ENCODE measurements at regions of chr6 and their contacts with region 1.

Region 1: GRCh38 chr6:142845624-142846458 is 99.1 kb downstream of the HIVEP2 start:
- DNase-seq: no peak
- ATAC-seq: peak; percentile 23
- H3K4me3 ChIP-seq: peak overlapping the region; percentile 48; the same call in 1 of the 2 replicates
- H3K27ac ChIP-seq: peak overlapping the region; percentile 98
- H3K4me1 ChIP-seq: peaks cover 81% of the 10 kb centered on the region
- H3K27me3 ChIP-seq: no peaks in the 10 kb centered on the region
- CTCF ChIP-seq: no peak
- EP300 ChIP-seq: no peak
- POLR2A ChIP-seq: peak; percentile 67
- RAD21 ChIP-seq: no peak

Region 2: DNA sequence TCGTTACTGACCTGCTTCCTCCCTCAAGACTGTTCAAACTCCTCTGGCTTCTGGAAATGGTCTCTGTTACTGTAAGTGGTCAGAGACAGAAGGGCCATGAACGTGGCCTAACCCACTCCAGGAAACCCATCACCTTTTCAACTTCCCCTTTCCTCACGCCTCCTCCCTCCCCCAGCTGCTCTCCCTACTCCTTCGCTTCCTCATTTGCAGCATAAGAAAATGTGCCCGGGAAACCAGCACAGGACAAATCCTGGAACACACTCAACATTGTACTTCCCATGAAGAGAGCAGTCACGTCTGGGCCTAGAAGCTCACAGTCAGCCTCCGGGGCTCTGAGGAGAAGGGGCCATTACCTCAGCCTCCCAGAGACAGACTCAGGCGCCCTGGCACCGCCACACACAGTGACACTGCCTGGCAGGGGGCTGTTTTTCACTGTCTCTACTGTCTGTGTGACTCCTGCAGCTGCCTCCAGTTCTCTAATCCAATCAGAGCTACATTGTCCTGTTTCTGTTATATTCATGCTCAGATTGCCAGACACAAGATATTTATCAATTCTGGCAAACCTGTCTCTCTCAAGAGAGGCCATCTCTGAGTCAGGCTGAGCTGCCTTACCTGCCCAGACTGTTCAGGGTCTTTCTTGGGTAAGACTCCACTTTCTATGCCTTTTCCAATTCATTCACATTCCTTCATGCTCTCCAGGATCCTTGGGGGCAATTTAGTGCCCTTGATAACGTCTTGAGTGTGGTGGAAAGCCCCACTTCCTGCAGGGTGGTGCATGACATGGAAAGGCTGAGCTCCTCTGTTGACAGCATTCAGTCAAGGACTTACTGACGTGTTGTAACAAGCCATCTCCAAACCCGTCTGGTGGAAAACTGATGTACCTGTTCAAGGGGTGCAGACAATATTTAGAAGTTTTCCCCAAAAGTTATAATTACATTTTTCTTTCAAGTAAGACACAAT is 143.1 kb before region 1 on chr6:
- CTCF ChIA-PET with region 1: no interaction called
- POLR2A ChIA-PET with region 1: no interaction called
- RAD21 ChIA-PET with region 1: interaction called, 4 read pairs
- SMC1A ChIA-PET with region 1: interaction called, 11 read pairs
- in situ Hi-C with region 1: no loop called
- intact Hi-C with region 1: no loop called
- DNase-seq: no peak
- ATAC-seq: peak; percentile 53
- H3K4me3 ChIP-seq: no peak overlapping the region
- H3K27ac ChIP-seq: no peak overlapping the region; the same call in 1 of the 2 replicates
- H3K4me1 ChIP-seq: peaks cover 14% of the 10 kb centered on the region
- H3K27me3 ChIP-seq: no peaks in the 10 kb centered on the region
- CTCF ChIP-seq: no peak
- EP300 ChIP-seq: no peak
- POLR2A ChIP-seq: no peak
- RAD21 ChIP-seq: no peak

Region 3: GRCh38 chr6:142802124-142802523 is 43.7 kb before region 1 on chr6:
- CTCF ChIA-PET with region 1: interaction called, 5 read pairs
- POLR2A ChIA-PET with region 1: interaction called, 6 read pairs
- RAD21 ChIA-PET with region 1: interaction called, 22 read pairs
- SMC1A ChIA-PET with region 1: interaction called, 12 read pairs
- in situ Hi-C with region 1: no loop called
- intact Hi-C with region 1: no loop called
- DNase-seq: no peak
- ATAC-seq: peak; percentile 44
- H3K4me3 ChIP-seq: no peak overlapping the region
- H3K27ac ChIP-seq: no peak overlapping the region
- H3K4me1 ChIP-seq: peaks cover 27% of the 10 kb centered on the region
- H3K27me3 ChIP-seq: no peaks in the 10 kb centered on the region
- CTCF ChIP-seq: no peak
- EP300 ChIP-seq: no peak
- POLR2A ChIP-seq: no peak
- RAD21 ChIP-seq: no peak

Region 4: GRCh38 chr6:142827369-142827768 is 18.5 kb before region 1 on chr6:
- CTCF ChIA-PET with region 1: interaction called, 20 read pairs
- POLR2A ChIA-PET with region 1: interaction called, 67 read pairs
- RAD21 ChIA-PET with region 1: interaction called, 374 read pairs
- SMC1A ChIA-PET with region 1: interaction called, 449 read pairs
- in situ Hi-C with region 1: no loop called
- intact Hi-C with region 1: no loop called
- DNase-seq: no peak
- ATAC-seq: no peak
- H3K4me3 ChIP-seq: no peak overlapping the region
- H3K27ac ChIP-seq: no peak overlapping the region
- H3K4me1 ChIP-seq: peaks cover 10% of the 10 kb centered on the region
- H3K27me3 ChIP-seq: no peaks in the 10 kb centered on the region
- CTCF ChIP-seq: no peak
- EP300 ChIP-seq: no peak
- POLR2A ChIP-seq: no peak
- RAD21 ChIP-seq: no peak

Region 5: DNA sequence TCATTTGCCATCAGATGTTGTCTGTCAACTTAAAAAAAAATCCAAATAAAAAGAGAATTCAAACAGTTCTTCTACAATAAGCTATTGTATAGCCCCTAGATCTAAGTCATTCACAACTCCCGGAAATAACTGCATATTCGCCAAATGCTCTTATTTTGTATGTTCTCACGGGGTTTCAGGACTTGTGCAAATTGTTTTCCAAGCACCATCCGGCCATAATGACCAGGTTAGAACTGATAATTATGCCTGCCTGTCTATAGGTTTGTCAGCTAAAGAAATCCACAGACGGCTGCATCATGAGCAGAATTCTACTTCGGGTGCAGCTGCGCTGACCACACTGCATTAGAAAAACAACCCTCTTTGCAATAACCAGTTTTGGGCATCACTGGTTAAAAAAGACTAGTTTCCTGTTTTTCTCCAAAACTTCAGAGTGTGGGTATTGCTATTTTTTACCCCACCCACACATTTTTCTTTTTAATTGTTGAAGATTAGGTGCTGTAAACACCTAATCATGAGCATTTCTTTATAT is 11.5 kb after region 1 on chr6:
- CTCF ChIA-PET with region 1: interaction called, 5 read pairs
- POLR2A ChIA-PET with region 1: interaction called, 19 read pairs
- RAD21 ChIA-PET with region 1: interaction called, 128 read pairs
- SMC1A ChIA-PET with region 1: interaction called, 94 read pairs
- in situ Hi-C with region 1: no loop called
- intact Hi-C with region 1: loop called (anchors 1 kb)
- DNase-seq: no peak
- ATAC-seq: peak; percentile 58
- H3K4me3 ChIP-seq: peak overlapping the region; percentile 59; the same call in 1 of the 2 replicates
- H3K27ac ChIP-seq: peak overlapping the region; percentile 98
- H3K4me1 ChIP-seq: peaks cover 54% of the 10 kb centered on the region
- H3K27me3 ChIP-seq: no peaks in the 10 kb centered on the region
- CTCF ChIP-seq: no peak
- EP300 ChIP-seq: peak in 1 of 2 experiments; percentile 57; a peak in 1 of 4 replicates
- POLR2A ChIP-seq: 0 out of 2 replicates have a peak, but pooled peaks have one; percentile 3
- RAD21 ChIP-seq: no peak

Region 6: DNA sequence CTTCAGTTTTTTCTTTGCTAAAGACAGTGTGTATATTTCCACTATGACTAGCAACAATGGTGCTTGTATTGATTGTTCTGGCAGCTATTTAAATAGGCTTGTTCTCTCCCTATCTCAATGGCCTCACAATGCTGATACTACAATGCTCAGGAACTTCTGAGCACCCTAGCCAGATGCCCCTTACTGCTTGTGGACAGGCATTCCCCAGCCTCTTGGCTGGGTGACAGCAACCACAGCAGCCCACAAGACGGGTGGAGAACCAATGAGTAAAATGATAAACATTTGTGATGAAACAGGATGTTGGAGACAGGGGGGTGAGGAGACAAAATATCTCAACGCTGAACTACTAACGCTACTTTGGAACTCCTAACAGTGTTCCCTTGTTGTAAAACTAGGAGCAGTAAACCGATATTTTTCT is 56.8 kb after region 1 on chr6:
- CTCF ChIA-PET with region 1: interaction called, 3 read pairs
- POLR2A ChIA-PET with region 1: interaction called, 4 read pairs
- RAD21 ChIA-PET with region 1: interaction called, 8 read pairs
- SMC1A ChIA-PET with region 1: interaction called, 15 read pairs
- in situ Hi-C with region 1: no loop called
- intact Hi-C with region 1: no loop called
- DNase-seq: peak; percentile 67
- ATAC-seq: peak; percentile 79
- H3K4me3 ChIP-seq: no peak overlapping the region
- H3K27ac ChIP-seq: peak overlapping the region; percentile 63
- H3K4me1 ChIP-seq: peaks cover 16% of the 10 kb centered on the region; the same call in 1 of the 2 replicates
- H3K27me3 ChIP-seq: no peaks in the 10 kb centered on the region
- CTCF ChIP-seq: no peak
- EP300 ChIP-seq: peak; percentile 53 to 65; a peak in 2 of 4 replicates
- POLR2A ChIP-seq: no peak
- RAD21 ChIP-seq: no peak

Region 7: DNA sequence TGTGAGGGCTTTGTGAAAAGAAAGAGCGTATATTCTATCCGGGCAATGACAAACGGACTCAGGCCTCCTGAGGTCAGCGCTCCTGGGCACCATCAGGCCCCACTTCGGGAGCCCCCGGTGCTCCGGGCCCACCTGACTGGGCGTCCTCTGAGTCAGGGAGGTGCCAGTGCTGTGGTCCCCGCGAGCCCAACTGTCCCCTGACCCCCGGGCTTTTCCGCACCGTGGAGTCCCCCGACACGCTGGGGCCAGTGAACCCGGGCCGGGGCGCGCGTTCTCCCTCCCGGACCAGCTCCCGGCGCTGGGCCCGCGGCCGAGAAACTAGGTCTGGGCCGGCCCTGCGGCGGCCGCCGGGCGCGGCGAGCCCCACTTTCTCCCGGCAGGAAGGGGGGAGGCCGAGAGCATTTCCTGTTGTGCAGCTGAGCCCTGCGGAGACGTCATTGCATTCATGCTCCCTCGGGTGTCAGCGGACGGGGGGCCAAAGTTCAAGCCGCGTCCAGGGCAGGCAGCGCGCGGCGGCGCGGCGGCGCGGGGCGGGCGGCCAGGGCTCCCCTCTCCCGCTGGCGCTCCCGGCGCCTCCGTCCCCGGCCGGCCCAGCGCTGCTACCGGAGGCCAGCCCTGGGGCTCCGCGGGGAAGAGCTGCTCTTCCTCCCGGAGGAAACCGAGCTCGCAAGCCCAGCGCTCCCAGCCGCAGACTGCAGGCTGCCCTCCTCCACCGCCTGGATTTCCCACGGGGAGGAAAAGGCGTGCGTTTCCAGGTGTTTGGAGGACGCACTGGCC is 80.8 kb after region 1 on chr6:
- CTCF ChIA-PET with region 1: no interaction called
- POLR2A ChIA-PET with region 1: interaction called, 5 read pairs
- RAD21 ChIA-PET with region 1: interaction called, 9 read pairs
- SMC1A ChIA-PET with region 1: interaction called, 10 read pairs
- in situ Hi-C with region 1: no loop called
- intact Hi-C with region 1: no loop called
- DNase-seq: no peak
- ATAC-seq: peak; percentile 80
- H3K4me3 ChIP-seq: peak overlapping the region; percentile 88
- H3K27ac ChIP-seq: peak overlapping the region; percentile 97
- H3K4me1 ChIP-seq: peaks cover 8% of the 10 kb centered on the region
- H3K27me3 ChIP-seq: no peaks in the 10 kb centered on the region
- CTCF ChIP-seq: no peak
- EP300 ChIP-seq: peak; percentile 64 to 66; a peak in 2 of 4 replicates
- POLR2A ChIP-seq: peak; percentile 86
- RAD21 ChIP-seq: no peak

Region 8: GRCh38 chr6:143068001-143068400 is 222.2 kb after region 1 on chr6:
- CTCF ChIA-PET with region 1: no interaction called
- POLR2A ChIA-PET with region 1: no interaction called
- RAD21 ChIA-PET with region 1: no interaction called
- SMC1A ChIA-PET with region 1: no interaction called
- in situ Hi-C with region 1: no loop called
- intact Hi-C with region 1: no loop called
- DNase-seq: no peak
- ATAC-seq: no peak
- H3K4me3 ChIP-seq: no peak overlapping the region
- H3K27ac ChIP-seq: no peak overlapping the region
- H3K4me1 ChIP-seq: no peaks in the 10 kb centered on the region
- H3K27me3 ChIP-seq: no peaks in the 10 kb centered on the region
- CTCF ChIP-seq: no peak
- EP300 ChIP-seq: no peak
- POLR2A ChIP-seq: no peak
- RAD21 ChIP-seq: no peak